ENCODE measurements at regions of chr13 and their contacts with region 1.

Region 1: DNA sequence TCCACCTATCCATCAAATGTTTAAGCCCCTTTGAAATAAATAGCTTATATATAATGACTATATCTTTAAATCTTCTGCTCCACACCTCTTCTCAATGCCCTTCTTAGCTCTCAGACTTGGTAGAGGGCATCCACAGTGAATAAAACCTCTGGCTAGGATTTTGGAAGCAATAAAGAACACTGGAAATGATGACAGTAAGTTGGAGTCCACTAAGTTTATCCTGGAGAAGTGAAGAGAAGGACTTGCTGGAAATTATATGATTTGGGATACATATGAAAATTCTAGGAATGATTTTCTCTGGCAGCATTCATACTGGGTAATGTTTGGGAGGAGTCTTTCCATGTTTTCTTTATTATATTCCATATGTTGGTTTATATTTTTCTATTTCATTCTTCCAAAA is 133.5 kb upstream of the KL start:
- DNase-seq: no peak
- ATAC-seq: no peak
- H3K4me3 ChIP-seq: no peak overlapping the region
- H3K27ac ChIP-seq: no peak overlapping the region
- H3K4me1 ChIP-seq: no peaks in the 10 kb centered on the region
- H3K27me3 ChIP-seq: no peaks in the 10 kb centered on the region
- CTCF ChIP-seq: no peak

Region 2: DNA sequence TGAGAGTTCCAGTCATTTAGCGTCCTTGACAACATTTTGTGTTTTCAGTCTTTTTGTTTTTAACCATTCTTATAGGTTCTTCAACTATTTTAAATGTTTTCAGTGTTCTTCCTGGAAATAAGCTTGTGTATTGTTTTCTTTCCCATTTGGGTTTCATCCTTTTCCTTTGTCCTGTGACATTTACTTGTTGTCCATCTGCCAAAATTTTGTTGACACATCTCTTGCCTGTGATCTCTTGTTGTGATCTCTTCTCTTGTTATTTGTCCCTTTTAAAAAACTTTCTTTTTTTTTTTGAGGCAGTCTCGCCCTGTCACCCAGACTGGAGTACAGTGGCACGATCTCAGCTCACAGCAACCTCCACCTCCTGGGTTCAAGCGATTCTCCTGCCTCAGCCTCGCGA is 200.0 kb before region 1 on chr13:
- CTCF ChIA-PET with region 1: no interaction called
- POLR2A ChIA-PET with region 1: no interaction called
- in situ Hi-C with region 1: no loop called
- intact Hi-C with region 1: no loop called
- DNase-seq: no peak
- ATAC-seq: no peak
- H3K4me3 ChIP-seq: no peak overlapping the region
- H3K27ac ChIP-seq: no peak overlapping the region
- H3K4me1 ChIP-seq: no peaks in the 10 kb centered on the region
- H3K27me3 ChIP-seq: no peaks in the 10 kb centered on the region
- CTCF ChIP-seq: no peak

Region 3: GRCh38 chr13:32863596-32863995 is 19.1 kb before region 1 on chr13:
- CTCF ChIA-PET with region 1: no interaction called
- POLR2A ChIA-PET with region 1: no interaction called
- in situ Hi-C with region 1: no loop called
- intact Hi-C with region 1: no loop called
- DNase-seq: no peak
- ATAC-seq: no peak
- H3K4me3 ChIP-seq: no peak overlapping the region
- H3K27ac ChIP-seq: no peak overlapping the region
- H3K4me1 ChIP-seq: no peaks in the 10 kb centered on the region
- H3K27me3 ChIP-seq: no peaks in the 10 kb centered on the region
- CTCF ChIP-seq: no peak

Region 4: GRCh38 chr13:32924886-32925285 is 42.2 kb after region 1 on chr13:
- CTCF ChIA-PET with region 1: no interaction called
- POLR2A ChIA-PET with region 1: interaction called, 10 read pairs
- in situ Hi-C with region 1: no loop called
- intact Hi-C with region 1: no loop called
- DNase-seq: no peak
- ATAC-seq: no peak
- H3K4me3 ChIP-seq: no peak overlapping the region
- H3K27ac ChIP-seq: no peak overlapping the region
- H3K4me1 ChIP-seq: no peaks in the 10 kb centered on the region
- H3K27me3 ChIP-seq: no peaks in the 10 kb centered on the region
- CTCF ChIP-seq: no peak

Measured in Panc1 (cell line).